CD14-positive monocyte (primary cell): ENCODE measurements at regions of chr16 and their contacts with region 1.

Region 1: DNA sequence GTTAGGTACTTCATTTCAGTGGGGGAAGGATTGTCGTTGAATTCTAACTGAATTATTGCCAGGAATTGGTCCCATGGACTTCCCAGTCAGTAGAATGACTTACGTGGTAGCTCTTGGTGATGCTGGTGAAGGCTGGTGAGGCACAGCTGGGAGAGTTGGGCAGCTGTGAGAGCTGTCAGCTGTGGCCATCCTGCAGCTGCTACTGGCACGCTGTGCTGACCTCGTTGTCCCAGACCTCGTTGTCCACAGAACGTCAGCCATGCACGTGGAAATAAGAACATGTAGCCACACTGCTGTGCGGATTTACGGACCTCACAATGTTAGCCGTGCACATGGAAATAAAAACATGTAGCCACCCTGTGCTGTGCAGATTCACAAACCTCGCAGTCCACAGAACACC is 102.3 kb downstream of the NPIPB11 start:
- DNase-seq: no peak
- H3K4me3 ChIP-seq: no peak overlapping the region
- H3K4me3 Mint-ChIP-seq: no peak overlapping the region
- H3K27ac ChIP-seq: no peak overlapping the region
- H3K27ac Mint-ChIP-seq: peak overlapping the region in 1 of 7 donors; percentile 20
- H3K4me1 ChIP-seq: peaks cover 22 to 25% of the 10 kb centered on the region in 2 donors
- H3K4me1 Mint-ChIP-seq: peaks cover 31% of the 10 kb centered on the region
- H3K27me3 ChIP-seq: no peaks in the 10 kb centered on the region
- H3K27me3 Mint-ChIP-seq: peaks cover 0 to 2% (median under 1%) of the 10 kb centered on the region in 3 donors
- CTCF ChIP-seq: no peak

Region 2: DNA sequence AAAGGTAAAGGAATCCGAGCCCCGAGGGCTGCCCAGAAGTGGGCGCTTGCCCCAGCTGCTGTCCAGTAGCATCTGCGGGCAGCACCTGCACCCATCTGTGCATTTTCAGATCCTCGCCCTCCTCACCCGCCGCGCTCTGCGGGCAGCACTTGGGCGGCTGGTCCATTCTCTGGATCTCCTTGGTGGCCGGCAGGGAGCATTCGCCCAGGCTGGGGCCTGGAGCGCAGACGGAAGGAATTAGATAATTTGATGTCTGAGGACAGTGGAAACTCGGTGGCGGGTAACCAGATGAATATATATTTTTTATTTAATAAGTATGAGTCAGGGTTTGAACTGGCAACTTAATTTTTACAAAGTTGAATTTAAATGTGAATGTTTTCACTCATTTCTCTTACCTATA is 13.8 kb after region 1 on chr16:
- intact Hi-C with region 1: loop called in 1 of 2 experiments (anchors 2 kb)
- DNase-seq: peak in 1 of 3 donors; percentile 38
- H3K4me3 ChIP-seq: peak overlapping the region in 1 of 3 experiments; percentile 43
- H3K4me3 Mint-ChIP-seq: peak overlapping the region in 1 of 2 donors; percentile 26
- H3K27ac ChIP-seq: peak overlapping the region; percentile 33 to 85
- H3K27ac Mint-ChIP-seq: peak overlapping the region; percentile 87 to 98 (median 94)
- H3K4me1 ChIP-seq: peaks cover 25 to 29% of the 10 kb centered on the region in 2 donors
- H3K4me1 Mint-ChIP-seq: peaks cover 33% of the 10 kb centered on the region
- H3K27me3 ChIP-seq: no peaks in the 10 kb centered on the region
- H3K27me3 Mint-ChIP-seq: no peaks in the 10 kb centered on the region
- CTCF ChIP-seq: no peak